ENCODE measurements at regions of chrX and their contacts with region 1.

Region 1: GRCh38 chrX:5876984-5877596 is 351.6 kb downstream of the NLGN4X start:
- H3K4me3 Mint-ChIP-seq: no peak overlapping the region
- H3K27ac Mint-ChIP-seq: no peak overlapping the region
- H3K4me1 Mint-ChIP-seq: no peaks in the 10 kb centered on the region
- H3K27me3 Mint-ChIP-seq: peaks cover 5% of the 10 kb centered on the region

Region 2: GRCh38 chrX:4547213-4547836 is 1329.8 kb before region 1 on chrX:
- intact Hi-C with region 1: loop called (anchors 5 kb)
- H3K4me3 Mint-ChIP-seq: no peak overlapping the region
- H3K27ac Mint-ChIP-seq: no peak overlapping the region
- H3K4me1 Mint-ChIP-seq: no peaks in the 10 kb centered on the region
- H3K27me3 Mint-ChIP-seq: no peaks in the 10 kb centered on the region

Region 3: GRCh38 chrX:5681159-5681558 is 195.9 kb before region 1 on chrX:
- intact Hi-C with region 1: loop called (anchors 2 kb)
- H3K4me3 Mint-ChIP-seq: no peak overlapping the region
- H3K27ac Mint-ChIP-seq: peak overlapping the region; percentile 50
- H3K4me1 Mint-ChIP-seq: no peaks in the 10 kb centered on the region
- H3K27me3 Mint-ChIP-seq: no peaks in the 10 kb centered on the region

Region 4: GRCh38 chrX:5928224-5928623 is 51.1 kb after region 1 on chrX:
- intact Hi-C with region 1: no loop called
- H3K4me3 Mint-ChIP-seq: no peak overlapping the region
- H3K27ac Mint-ChIP-seq: no peak overlapping the region
- H3K4me1 Mint-ChIP-seq: no peaks in the 10 kb centered on the region
- H3K27me3 Mint-ChIP-seq: no peaks in the 10 kb centered on the region

Region 5: GRCh38 chrX:5998901-5999300 is 121.8 kb after region 1 on chrX:
- intact Hi-C with region 1: no loop called
- H3K4me3 Mint-ChIP-seq: no peak overlapping the region
- H3K27ac Mint-ChIP-seq: no peak overlapping the region
- H3K4me1 Mint-ChIP-seq: no peaks in the 10 kb centered on the region
- H3K27me3 Mint-ChIP-seq: no peaks in the 10 kb centered on the region